ENCODE measurements at regions of chr3 and their contacts with region 1.

Region 1: GRCh38 chr3:50550079-50550741 is 17.3 kb downstream of the C3orf18 start:
- DNase-seq: peak in 1 of 2 experiments; percentile 94
- H3K4me3 ChIP-seq: no peak overlapping the region
- H3K27ac ChIP-seq: no peak overlapping the region
- H3K4me1 ChIP-seq: peaks cover 0 to 6% (median 2%) of the 10 kb centered on the region in 4 experiments; a peak in 3 of 7 replicates
- H3K27me3 ChIP-seq: peaks cover 0 to 3% (median 0%) of the 10 kb centered on the region in 4 experiments; a peak in 3 of 7 replicates
- CTCF ChIP-seq: peak in 2 of 3 experiments; percentile 81 to 88; a peak in 3 of 4 replicates
- EP300 ChIP-seq: no peak
- POLR2A ChIP-seq: no peak
- RAD21 ChIP-seq: peak; percentile 91

Region 2: DNA sequence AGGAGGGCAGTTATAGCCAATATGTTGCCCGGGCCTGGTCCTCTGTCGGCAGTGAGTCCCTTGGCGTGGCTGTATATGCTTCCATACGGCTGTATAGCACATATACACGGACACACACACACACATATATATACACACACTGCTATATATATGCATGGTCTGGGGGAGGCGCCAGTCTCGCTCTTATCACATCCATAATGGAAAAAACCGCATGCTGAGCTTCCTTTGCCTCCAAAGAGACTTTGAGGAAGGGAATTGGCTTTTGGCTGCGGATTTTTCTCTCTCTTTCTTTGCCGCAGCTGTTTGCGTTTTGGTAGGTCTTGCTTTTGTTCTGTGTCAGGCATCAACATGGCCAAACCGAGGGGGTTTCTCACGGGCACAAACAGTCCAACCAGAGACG is 179.6 kb before region 1 on chr3:
- CTCF ChIA-PET with region 1: interaction called, 28 read pairs
- POLR2A ChIA-PET with region 1: no interaction called
- DNase-seq: no peak
- H3K4me3 ChIP-seq: no peak overlapping the region
- H3K27ac ChIP-seq: no peak overlapping the region
- H3K4me1 ChIP-seq: peaks cover 0 to 32% (median 23%) of the 10 kb centered on the region in 4 experiments; a peak in 6 of 7 replicates
- H3K27me3 ChIP-seq: no peaks in the 10 kb centered on the region; a peak in 2 of 7 replicates
- CTCF ChIP-seq: peak in 1 of 3 experiments; percentile 34; a peak in 1 of 4 replicates
- EP300 ChIP-seq: no peak
- POLR2A ChIP-seq: no peak
- RAD21 ChIP-seq: peak; percentile 41 to 44; a peak in 3 of 4 replicates

Region 3: GRCh38 chr3:50445919-50446318 is 104.3 kb before region 1 on chr3:
- CTCF ChIA-PET with region 1: interaction called, 473 read pairs
- POLR2A ChIA-PET with region 1: no interaction called
- DNase-seq: no peak
- H3K4me3 ChIP-seq: no peak overlapping the region
- H3K27ac ChIP-seq: no peak overlapping the region
- H3K4me1 ChIP-seq: peaks cover 0 to 15% (median 8%) of the 10 kb centered on the region in 4 experiments; a peak in 6 of 7 replicates
- H3K27me3 ChIP-seq: no peaks in the 10 kb centered on the region
- CTCF ChIP-seq: no peak
- EP300 ChIP-seq: no peak
- POLR2A ChIP-seq: no peak
- RAD21 ChIP-seq: no peak

Region 4: DNA sequence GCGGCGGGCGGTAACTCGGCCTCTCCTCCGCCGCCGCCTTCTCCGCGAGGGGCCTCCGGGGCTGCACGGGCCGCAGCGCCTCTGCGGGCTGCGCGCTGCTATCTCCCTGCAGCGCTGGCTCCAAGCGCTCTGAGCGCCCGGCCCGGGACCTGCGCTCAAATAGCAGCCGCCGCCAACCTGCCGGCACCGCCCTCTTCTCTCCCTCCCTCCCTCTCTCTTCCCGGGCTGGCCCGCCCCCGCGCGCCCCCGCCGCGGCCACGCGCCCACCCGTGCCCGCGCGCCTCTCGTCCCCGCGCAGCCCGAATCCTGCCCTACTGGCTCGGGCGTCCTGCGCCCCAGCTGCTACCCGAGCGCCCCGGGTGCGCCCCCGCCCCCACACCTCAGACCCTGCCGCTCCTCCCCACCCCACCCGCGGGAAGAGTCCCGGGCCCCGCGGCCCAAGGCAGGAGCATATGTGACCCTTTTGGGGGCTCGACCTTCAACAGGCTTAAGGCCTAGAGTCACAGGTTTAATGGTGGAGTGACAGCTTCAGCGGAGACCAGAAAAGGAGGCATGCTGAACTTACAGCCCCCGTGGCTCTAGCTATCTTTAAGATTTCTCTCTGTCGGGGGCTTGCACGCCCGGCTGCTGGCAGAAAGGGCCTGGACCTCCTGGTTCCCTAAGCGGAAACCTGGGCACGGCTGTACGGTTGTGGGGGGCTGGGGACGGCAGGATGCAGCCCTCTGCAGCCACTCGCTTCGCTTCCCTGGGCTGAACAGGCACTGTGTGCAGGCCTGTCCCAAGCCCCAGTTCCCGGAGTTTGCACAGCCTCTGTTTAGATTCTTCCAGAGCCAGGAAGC is 46.5 kb before region 1 on chr3 and contains the start of gene CACNA2D2:
- CTCF ChIA-PET with region 1: interaction called, 68 read pairs
- POLR2A ChIA-PET with region 1: no interaction called
- DNase-seq: peak in 1 of 2 experiments; percentile 82
- H3K4me3 ChIP-seq: peak within 1 kb of the TSS; percentile 47 to 94 (median 64)
- H3K27ac ChIP-seq: no peak within 1 kb of the TSS
- H3K4me1 ChIP-seq: peaks cover 0 to 15% (median 11%) of the 10 kb centered on the region in 4 experiments; a peak in 6 of 7 replicates
- H3K27me3 ChIP-seq: peaks cover 4 to 42% (median 27%) of the 10 kb centered on the region in 4 experiments
- CTCF ChIP-seq: 0 out of 4 replicates have a peak, but pooled peaks of 1 of the 3 experiments have one; percentile 4
- EP300 ChIP-seq: no peak
- POLR2A ChIP-seq: peak in 1 of 2 experiments; percentile 87; a peak in 2 of 3 replicates
- RAD21 ChIP-seq: peak in 1 of 2 experiments; percentile 19; a peak in 1 of 4 replicates
- total RNA-seq, gene CACNA2D2: 14.0 and 14.1 TPM in 2 replicates

Region 5: DNA sequence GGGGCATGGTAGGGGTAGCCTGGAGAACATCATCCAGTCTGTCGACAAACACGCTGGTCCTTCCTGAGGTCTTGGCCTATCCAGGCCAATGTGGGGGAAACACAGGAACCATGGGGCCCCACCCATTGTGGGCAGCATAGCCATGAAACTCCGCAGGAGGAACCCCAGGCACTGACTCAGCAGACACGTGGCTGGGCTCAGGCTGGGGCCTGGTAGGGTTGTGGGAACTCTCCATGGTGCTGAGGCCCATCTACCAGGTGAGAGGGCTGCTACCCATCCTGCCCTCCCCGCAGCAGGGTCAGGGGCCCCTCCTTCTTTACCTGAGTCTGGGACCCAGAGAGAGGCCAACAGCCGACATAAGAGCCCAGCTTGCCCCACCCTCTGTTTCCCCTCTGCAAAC is 24.2 kb before region 1 on chr3:
- CTCF ChIA-PET with region 1: interaction called, 129 read pairs
- POLR2A ChIA-PET with region 1: no interaction called
- DNase-seq: peak in 1 of 2 experiments; percentile 87
- H3K4me3 ChIP-seq: no peak overlapping the region
- H3K27ac ChIP-seq: no peak overlapping the region
- H3K4me1 ChIP-seq: peaks cover 3 to 37% (median 21%) of the 10 kb centered on the region in 4 experiments
- H3K27me3 ChIP-seq: peaks cover 0 to 9% (median 5%) of the 10 kb centered on the region in 4 experiments; a peak in 5 of 7 replicates
- CTCF ChIP-seq: no peak
- EP300 ChIP-seq: no peak
- POLR2A ChIP-seq: no peak
- RAD21 ChIP-seq: 0 out of 4 replicates have a peak, but pooled peaks of 1 of the 2 experiments have one; percentile 8